CD4-positive, alpha-beta memory T cell (primary cell): ENCODE measurements at regions of chr5 and their contacts with region 1.

Region 1: GRCh38 chr5:177403792-177404640 is 3.6 kb upstream of the PFN3 start:
- DNase-seq: peak; percentile 84 to 85 (median 85)
- H3K4me3 ChIP-seq: peak overlapping the region; percentile 42 to 70
- H3K4me3 Mint-ChIP-seq: peak overlapping the region; percentile 82 to 93 (median 86)
- H3K27ac ChIP-seq: peak overlapping the region; percentile 63
- H3K27ac Mint-ChIP-seq: peak overlapping the region in 6 of 7 donors; percentile 57 to 88 (median 80)
- H3K4me1 ChIP-seq: peaks cover 39% of the 10 kb centered on the region
- H3K4me1 Mint-ChIP-seq: peaks cover 6 to 36% (median 22%) of the 10 kb centered on the region in 4 donors
- H3K27me3 ChIP-seq: no peaks in the 10 kb centered on the region
- H3K27me3 Mint-ChIP-seq: no peaks in the 10 kb centered on the region

Region 2: DNA sequence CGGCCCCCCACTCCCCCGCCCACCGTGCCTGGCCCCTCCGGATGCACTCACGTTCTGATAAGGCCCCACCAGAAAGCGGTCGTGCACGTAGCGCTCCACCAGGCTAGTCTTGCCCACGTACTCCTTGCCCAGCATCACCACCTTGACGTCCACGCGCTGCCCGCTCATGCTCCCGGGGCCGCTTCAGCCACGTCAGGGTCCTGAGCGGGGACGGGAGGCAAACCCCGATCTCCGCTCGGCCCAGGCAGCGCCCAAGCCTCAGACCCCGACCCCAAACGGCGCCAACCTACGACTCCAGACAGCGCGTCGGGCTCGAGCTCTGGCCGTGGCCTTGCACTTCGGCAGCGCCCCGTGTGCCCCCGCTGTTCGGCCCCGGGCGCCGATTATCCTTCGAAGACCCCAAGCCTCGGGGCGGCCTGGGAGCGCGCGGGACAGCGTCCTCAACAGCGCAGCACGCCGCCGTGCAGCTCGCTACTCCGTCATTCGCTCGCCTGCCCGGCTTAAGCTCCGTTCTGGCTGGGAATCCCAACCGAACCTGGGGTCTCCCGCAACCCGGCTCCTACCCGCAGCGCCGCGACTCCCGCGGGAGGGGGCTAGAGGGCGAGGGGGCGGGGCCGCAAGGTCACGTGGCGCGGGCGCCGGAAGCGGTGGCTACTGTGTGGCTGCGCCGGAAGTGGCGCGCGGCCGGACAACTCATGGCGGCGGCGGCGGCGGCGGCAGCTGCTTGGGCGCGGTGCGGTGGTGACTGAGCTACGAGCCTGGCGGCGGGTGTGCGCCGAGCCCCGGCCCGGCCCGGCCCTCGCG is 100.7 kb before region 1 on chr5 and contains the starts of genes PRELID1 and RAB24:
- CTCF ChIA-PET with region 1: interaction called, 69 read pairs
- POLR2A ChIA-PET with region 1: interaction called, 4 read pairs
- intact Hi-C with region 1: no loop called
- DNase-seq: peak; percentile 84 to 88 (median 86)
- H3K4me3 ChIP-seq: peak within 1 kb of the TSS; percentile 84 to 94
- H3K4me3 Mint-ChIP-seq: peak within 1 kb of the TSS; percentile 91 to 97 (median 95)
- H3K27ac ChIP-seq: peak within 1 kb of the TSS; percentile 78
- H3K27ac Mint-ChIP-seq: peak within 1 kb of the TSS; percentile 84 to 97 (median 92)
- H3K4me1 ChIP-seq: peaks cover 68% of the 10 kb centered on the region
- H3K4me1 Mint-ChIP-seq: peaks cover 48 to 86% (median 69%) of the 10 kb centered on the region in 4 donors
- H3K27me3 ChIP-seq: no peaks in the 10 kb centered on the region
- H3K27me3 Mint-ChIP-seq: no peaks in the 10 kb centered on the region
- total RNA-seq, gene PRELID1: 70.9 to 72.1 TPM
- total RNA-seq, gene RAB24: 19.8 to 20.5 TPM

Region 3: GRCh38 chr5:177351385-177352329 is 52.4 kb before region 1 on chr5 and contains the start of gene LMAN2:
- CTCF ChIA-PET with region 1: interaction called, 32 read pairs
- POLR2A ChIA-PET with region 1: interaction called, 18 read pairs
- intact Hi-C with region 1: no loop called
- DNase-seq: peak; percentile 93 to 95 (median 94)
- H3K4me3 ChIP-seq: peak within 1 kb of the TSS; percentile 91 to 99
- H3K4me3 Mint-ChIP-seq: peak within 1 kb of the TSS; percentile 91 to 100 (median 97)
- H3K27ac ChIP-seq: peak within 1 kb of the TSS; percentile 93
- H3K27ac Mint-ChIP-seq: peak within 1 kb of the TSS; percentile 97 to 100 (median 99)
- H3K4me1 ChIP-seq: peaks cover 62% of the 10 kb centered on the region
- H3K4me1 Mint-ChIP-seq: peaks cover 42 to 81% (median 63%) of the 10 kb centered on the region in 4 donors
- H3K27me3 ChIP-seq: no peaks in the 10 kb centered on the region
- H3K27me3 Mint-ChIP-seq: no peaks in the 10 kb centered on the region
- total RNA-seq, gene LMAN2: 114 to 123 TPM

Region 4: GRCh38 chr5:177370488-177371119 is 33.4 kb before region 1 on chr5:
- CTCF ChIA-PET with region 1: interaction called, 31 read pairs
- POLR2A ChIA-PET with region 1: interaction called, 19 read pairs
- intact Hi-C with region 1: loop called (anchors 2 kb)
- DNase-seq: peak in 3 of 5 donors; percentile 65 to 81 (median 79)
- H3K4me3 ChIP-seq: no peak overlapping the region
- H3K4me3 Mint-ChIP-seq: peak overlapping the region in 5 of 8 donors; percentile 15 to 80 (median 61)
- H3K27ac ChIP-seq: peak overlapping the region; percentile 28
- H3K27ac Mint-ChIP-seq: peak overlapping the region in 4 of 7 donors; percentile 64 to 88 (median 70)
- H3K4me1 ChIP-seq: peaks cover 85% of the 10 kb centered on the region
- H3K4me1 Mint-ChIP-seq: peaks cover 47 to 78% (median 62%) of the 10 kb centered on the region in 4 donors
- H3K27me3 ChIP-seq: no peaks in the 10 kb centered on the region
- H3K27me3 Mint-ChIP-seq: no peaks in the 10 kb centered on the region

Region 5: GRCh38 chr5:177390363-177391300 is 13.4 kb before region 1 on chr5:
- CTCF ChIA-PET with region 1: interaction called, 295 read pairs
- POLR2A ChIA-PET with region 1: interaction called, 138 read pairs
- intact Hi-C with region 1: loop called (anchors 1 kb)
- DNase-seq: peak; percentile 86 to 89 (median 88)
- H3K4me3 ChIP-seq: no peak overlapping the region
- H3K4me3 Mint-ChIP-seq: peak overlapping the region in 7 of 8 donors; percentile 68 to 88 (median 79)
- H3K27ac ChIP-seq: peak overlapping the region; percentile 71
- H3K27ac Mint-ChIP-seq: peak overlapping the region; percentile 79 to 98 (median 96)
- H3K4me1 ChIP-seq: peaks cover 49% of the 10 kb centered on the region
- H3K4me1 Mint-ChIP-seq: peaks cover 31 to 58% (median 38%) of the 10 kb centered on the region in 4 donors
- H3K27me3 ChIP-seq: no peaks in the 10 kb centered on the region
- H3K27me3 Mint-ChIP-seq: no peaks in the 10 kb centered on the region

Region 6: GRCh38 chr5:177431317-177432142 is 27.5 kb after region 1 on chr5:
- CTCF ChIA-PET with region 1: interaction called, 821 read pairs
- POLR2A ChIA-PET with region 1: interaction called, 148 read pairs
- intact Hi-C with region 1: loop called (anchors 1 kb)
- DNase-seq: peak; percentile 81 to 88 (median 85)
- H3K4me3 ChIP-seq: peak overlapping the region; percentile 36 to 87
- H3K4me3 Mint-ChIP-seq: peak overlapping the region; percentile 85 to 97 (median 94)
- H3K27ac ChIP-seq: peak overlapping the region; percentile 87
- H3K27ac Mint-ChIP-seq: peak overlapping the region; percentile 91 to 99 (median 96)
- H3K4me1 ChIP-seq: peaks cover 94% of the 10 kb centered on the region
- H3K4me1 Mint-ChIP-seq: peaks cover 34 to 89% (median 59%) of the 10 kb centered on the region in 4 donors
- H3K27me3 ChIP-seq: no peaks in the 10 kb centered on the region
- H3K27me3 Mint-ChIP-seq: no peaks in the 10 kb centered on the region

Region 7: GRCh38 chr5:177454397-177455035 is 50.5 kb after region 1 on chr5:
- CTCF ChIA-PET with region 1: interaction called, 821 read pairs
- POLR2A ChIA-PET with region 1: interaction called, 555 read pairs
- intact Hi-C with region 1: loop called (anchors 1 kb)
- DNase-seq: peak; percentile 88 to 94 (median 91)
- H3K4me3 ChIP-seq: peak overlapping the region in 1 of 2 donors; percentile 77
- H3K4me3 Mint-ChIP-seq: peak overlapping the region; percentile 31 to 89 (median 82)
- H3K27ac ChIP-seq: peak overlapping the region; percentile 96
- H3K27ac Mint-ChIP-seq: peak overlapping the region; percentile 76 to 97 (median 85)
- H3K4me1 ChIP-seq: peaks cover 16% of the 10 kb centered on the region
- H3K4me1 Mint-ChIP-seq: peaks cover 9 to 36% (median 23%) of the 10 kb centered on the region in 4 donors
- H3K27me3 ChIP-seq: no peaks in the 10 kb centered on the region
- H3K27me3 Mint-ChIP-seq: peaks cover 0 to 2% of the 10 kb centered on the region in 2 donors